ENCODE measurements at regions of chr3 and their contacts with region 1.

Region 1: GRCh38 chr3:46359733-46360493 is 6.0 kb downstream of the CCR2 start:
- H3K4me3 Mint-ChIP-seq: peak overlapping the region; percentile 55
- H3K27ac Mint-ChIP-seq: peak overlapping the region; percentile 88
- H3K4me1 Mint-ChIP-seq: peaks cover 88% of the 10 kb centered on the region
- H3K27me3 Mint-ChIP-seq: no peaks in the 10 kb centered on the region

Region 2: GRCh38 chr3:46297658-46298463 is 62.1 kb before region 1 on chr3:
- intact Hi-C with region 1: loop called (anchors 5 kb)
- H3K4me3 Mint-ChIP-seq: no peak overlapping the region
- H3K27ac Mint-ChIP-seq: peak overlapping the region; percentile 99
- H3K4me1 Mint-ChIP-seq: peaks cover 94% of the 10 kb centered on the region
- H3K27me3 Mint-ChIP-seq: no peaks in the 10 kb centered on the region

Region 3: DNA sequence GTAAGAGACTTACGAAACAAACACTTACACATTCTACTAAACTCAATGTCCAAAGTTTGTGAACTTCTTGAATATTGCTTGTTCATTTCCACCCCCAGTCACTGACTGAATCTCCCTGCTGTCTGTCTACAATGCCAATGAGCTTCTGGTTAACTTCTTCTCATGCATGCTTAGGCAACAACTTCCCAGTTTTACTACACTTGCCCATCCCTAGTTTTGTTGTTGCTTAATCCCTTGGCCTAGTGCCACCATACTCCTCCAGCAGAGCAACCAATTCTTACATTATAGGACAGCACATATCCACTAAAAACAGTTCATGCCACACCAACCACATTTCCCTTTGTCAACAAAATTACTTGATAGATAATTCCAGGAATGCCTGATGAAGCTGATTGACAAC is 46.9 kb before region 1 on chr3:
- intact Hi-C with region 1: loop called (anchors 5 kb)
- H3K4me3 Mint-ChIP-seq: no peak overlapping the region
- H3K27ac Mint-ChIP-seq: peak overlapping the region; percentile 77
- H3K4me1 Mint-ChIP-seq: peaks cover 84% of the 10 kb centered on the region
- H3K27me3 Mint-ChIP-seq: no peaks in the 10 kb centered on the region